ENCODE measurements at regions of chr21 and their contacts with region 1.

Region 1: DNA sequence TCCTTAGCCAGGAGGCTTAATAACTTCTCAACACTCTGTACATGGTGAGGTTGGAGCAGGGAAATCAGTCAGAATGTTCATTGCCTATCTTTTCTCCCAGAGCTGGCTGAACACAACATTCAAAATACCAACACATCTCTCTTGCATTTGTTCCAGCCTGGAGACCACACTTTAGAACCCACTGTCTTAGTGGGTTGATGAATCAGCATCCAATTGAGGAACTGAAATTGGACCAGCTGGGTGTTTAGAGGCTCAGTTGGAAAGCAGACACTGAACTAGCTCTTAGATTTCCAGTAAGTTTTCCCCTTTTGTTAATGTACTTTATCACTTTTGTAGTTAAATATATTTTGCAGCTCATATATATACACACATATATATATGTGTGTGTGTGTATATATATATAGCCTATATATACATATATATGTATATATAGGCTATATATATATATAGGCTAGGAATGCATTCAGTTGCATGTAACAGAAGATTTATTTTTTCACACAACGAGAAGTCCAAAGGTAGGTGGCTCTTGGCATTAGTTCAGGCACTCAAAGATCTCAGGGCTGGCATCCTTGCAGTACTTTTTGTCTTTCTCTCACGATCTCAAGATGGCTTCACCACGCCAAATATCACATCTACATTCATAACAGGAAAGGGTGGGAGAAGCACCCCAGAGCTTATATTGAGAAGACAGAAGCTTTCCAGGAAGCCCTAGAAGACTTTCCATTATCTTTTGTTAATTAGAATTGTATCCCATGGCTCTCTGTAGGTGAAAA is 35.0 kb upstream of the HUNK start:
- DNase-seq: no peak
- ATAC-seq: no peak
- H3K4me3 ChIP-seq: no peak overlapping the region
- H3K4me3 Mint-ChIP-seq: no peak overlapping the region
- H3K27ac ChIP-seq: no peak overlapping the region
- H3K27ac Mint-ChIP-seq: no peak overlapping the region
- H3K4me1 ChIP-seq: no peaks in the 10 kb centered on the region
- H3K4me1 Mint-ChIP-seq: no peaks in the 10 kb centered on the region
- H3K27me3 ChIP-seq: peaks cover 0 to 5% of the 10 kb centered on the region in 2 experiments
- H3K27me3 Mint-ChIP-seq: peaks cover 11 to 32% of the 10 kb centered on the region in 2 donors

Region 2: DNA sequence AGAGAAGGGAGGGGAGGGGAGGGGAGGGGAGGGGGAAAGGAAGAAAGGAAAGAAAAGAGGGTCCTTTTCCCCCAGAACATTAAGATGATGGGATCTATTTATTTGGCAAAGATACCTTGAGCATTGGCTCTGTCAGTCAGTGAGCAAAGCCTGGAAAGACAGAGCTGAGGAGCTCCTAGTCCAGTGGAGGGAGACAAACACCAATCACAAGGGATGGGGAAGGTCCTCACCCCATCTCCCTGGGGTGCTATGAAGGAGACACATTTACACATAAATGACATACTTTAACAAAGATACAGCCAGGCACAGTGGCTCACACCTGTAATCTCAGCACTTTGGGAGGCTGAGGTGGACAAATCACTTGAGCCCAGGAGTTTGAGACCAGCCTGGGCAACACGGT is 338.8 kb before region 1 on chr21:
- CTCF ChIA-PET with region 1: interaction called in 1 of 2 experiments, 11 read pairs
- POLR2A ChIA-PET with region 1: no interaction called
- DNase-seq: no peak
- ATAC-seq: no peak
- H3K4me3 ChIP-seq: no peak overlapping the region
- H3K4me3 Mint-ChIP-seq: no peak overlapping the region
- H3K27ac ChIP-seq: no peak overlapping the region
- H3K27ac Mint-ChIP-seq: no peak overlapping the region
- H3K4me1 ChIP-seq: no peaks in the 10 kb centered on the region
- H3K4me1 Mint-ChIP-seq: no peaks in the 10 kb centered on the region
- H3K27me3 ChIP-seq: no peaks in the 10 kb centered on the region
- H3K27me3 Mint-ChIP-seq: no peaks in the 10 kb centered on the region